CD8-positive, alpha-beta memory T cell (primary cell): ENCODE measurements at regions of chr21 and their contacts with region 1.

Region 1: GRCh38 chr21:44792702-44793591 is 8.7 kb downstream of the UBE2G2 start:
- DNase-seq: peak; percentile 23 to 65 (median 48)
- H3K4me3 ChIP-seq: no peak overlapping the region
- H3K4me3 Mint-ChIP-seq: peak overlapping the region in 1 of 7 donors; percentile 18
- H3K27ac ChIP-seq: no peak overlapping the region
- H3K27ac Mint-ChIP-seq: peak overlapping the region; percentile 6 to 84 (median 61)
- H3K4me1 ChIP-seq: peaks cover 8% of the 10 kb centered on the region
- H3K4me1 Mint-ChIP-seq: peaks cover 39 to 72% (median 44%) of the 10 kb centered on the region in 3 donors
- H3K27me3 ChIP-seq: no peaks in the 10 kb centered on the region
- H3K27me3 Mint-ChIP-seq: peaks cover 0 to 3% of the 10 kb centered on the region in 2 donors

Region 2: GRCh38 chr21:44742418-44743153 is 50.4 kb before region 1 on chr21:
- CTCF ChIA-PET with region 1: interaction called, 19 read pairs
- POLR2A ChIA-PET with region 1: no interaction called
- DNase-seq: peak in 2 of 5 donors; percentile 28 to 33
- H3K4me3 ChIP-seq: no peak overlapping the region
- H3K4me3 Mint-ChIP-seq: no peak overlapping the region
- H3K27ac ChIP-seq: no peak overlapping the region
- H3K27ac Mint-ChIP-seq: peak overlapping the region in 5 of 8 donors; percentile 33 to 77 (median 52)
- H3K4me1 ChIP-seq: no peaks in the 10 kb centered on the region
- H3K4me1 Mint-ChIP-seq: peaks cover 2 to 8% (median 7%) of the 10 kb centered on the region in 3 donors
- H3K27me3 ChIP-seq: no peaks in the 10 kb centered on the region
- H3K27me3 Mint-ChIP-seq: no peaks in the 10 kb centered on the region

Region 3: GRCh38 chr21:44751186-44751798 is 41.7 kb before region 1 on chr21:
- CTCF ChIA-PET with region 1: no interaction called
- POLR2A ChIA-PET with region 1: interaction called, 11 read pairs
- DNase-seq: peak in 1 of 5 donors; percentile 41
- H3K4me3 ChIP-seq: no peak overlapping the region
- H3K4me3 Mint-ChIP-seq: no peak overlapping the region
- H3K27ac ChIP-seq: no peak overlapping the region
- H3K27ac Mint-ChIP-seq: no peak overlapping the region
- H3K4me1 ChIP-seq: no peaks in the 10 kb centered on the region
- H3K4me1 Mint-ChIP-seq: no peaks in the 10 kb centered on the region
- H3K27me3 ChIP-seq: peaks cover 11% of the 10 kb centered on the region
- H3K27me3 Mint-ChIP-seq: peaks cover 0 to 14% of the 10 kb centered on the region in 2 donors

Region 4: GRCh38 chr21:44958471-44959191 is 165.7 kb after region 1 on chr21:
- CTCF ChIA-PET with region 1: no interaction called
- POLR2A ChIA-PET with region 1: no interaction called
- DNase-seq: no peak
- H3K4me3 ChIP-seq: no peak overlapping the region
- H3K4me3 Mint-ChIP-seq: no peak overlapping the region
- H3K27ac ChIP-seq: no peak overlapping the region
- H3K27ac Mint-ChIP-seq: no peak overlapping the region
- H3K4me1 ChIP-seq: no peaks in the 10 kb centered on the region
- H3K4me1 Mint-ChIP-seq: peaks cover 3 to 26% (median 13%) of the 10 kb centered on the region in 3 donors
- H3K27me3 ChIP-seq: no peaks in the 10 kb centered on the region
- H3K27me3 Mint-ChIP-seq: peaks cover 0 to 2% of the 10 kb centered on the region in 2 donors

Region 5: GRCh38 chr21:45019076-45019956 is 226.4 kb after region 1 on chr21:
- CTCF ChIA-PET with region 1: no interaction called
- POLR2A ChIA-PET with region 1: no interaction called
- DNase-seq: peak in 1 of 5 donors; percentile 40
- H3K4me3 ChIP-seq: no peak overlapping the region
- H3K4me3 Mint-ChIP-seq: peak overlapping the region in 5 of 7 donors; percentile 24 to 48 (median 34)
- H3K27ac ChIP-seq: no peak overlapping the region
- H3K27ac Mint-ChIP-seq: no peak overlapping the region
- H3K4me1 ChIP-seq: no peaks in the 10 kb centered on the region
- H3K4me1 Mint-ChIP-seq: peaks cover 5 to 8% (median 6%) of the 10 kb centered on the region in 3 donors
- H3K27me3 ChIP-seq: peaks cover 14% of the 10 kb centered on the region
- H3K27me3 Mint-ChIP-seq: peaks cover 34 to 50% of the 10 kb centered on the region in 2 donors